ENCODE measurements at regions of chr12 and their contacts with region 1.

Region 1: DNA sequence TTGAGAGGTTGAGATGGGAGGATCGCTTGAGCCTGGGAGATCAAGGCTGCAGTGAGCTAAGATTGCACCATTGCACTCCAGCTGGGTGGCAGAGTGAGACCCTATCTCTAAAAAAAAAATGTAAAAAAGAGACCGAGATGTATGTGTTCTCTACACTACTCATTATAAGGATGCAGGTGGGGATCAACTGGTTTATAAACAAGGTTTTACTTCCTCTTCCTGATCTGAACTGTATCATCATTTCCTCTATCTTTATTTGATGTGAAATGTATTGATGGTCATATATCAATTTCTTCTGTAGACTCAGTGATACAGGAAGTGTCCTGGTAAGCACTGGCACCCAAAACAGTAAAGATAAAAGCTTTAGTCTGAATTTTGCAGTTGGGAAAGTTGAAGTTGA is 20.1 kb upstream of the USP44 start:
- DNase-seq: no peak
- ATAC-seq: no peak
- H3K4me3 ChIP-seq: no peak overlapping the region
- H3K4me3 Mint-ChIP-seq: peak overlapping the region in 3 of 10 donors; percentile 7 to 55 (median 34)
- H3K27ac ChIP-seq: no peak overlapping the region
- H3K27ac Mint-ChIP-seq: peak overlapping the region in 7 of 9 donors; percentile 62 to 83 (median 71)
- H3K4me1 ChIP-seq: peaks cover 4 to 14% of the 10 kb centered on the region in 2 donors
- H3K4me1 Mint-ChIP-seq: peaks cover 6 to 49% (median 32%) of the 10 kb centered on the region in 7 donors
- H3K27me3 ChIP-seq: no peaks in the 10 kb centered on the region
- H3K27me3 Mint-ChIP-seq: peaks cover 4 to 21% (median 8%) of the 10 kb centered on the region in 5 donors

Region 2: DNA sequence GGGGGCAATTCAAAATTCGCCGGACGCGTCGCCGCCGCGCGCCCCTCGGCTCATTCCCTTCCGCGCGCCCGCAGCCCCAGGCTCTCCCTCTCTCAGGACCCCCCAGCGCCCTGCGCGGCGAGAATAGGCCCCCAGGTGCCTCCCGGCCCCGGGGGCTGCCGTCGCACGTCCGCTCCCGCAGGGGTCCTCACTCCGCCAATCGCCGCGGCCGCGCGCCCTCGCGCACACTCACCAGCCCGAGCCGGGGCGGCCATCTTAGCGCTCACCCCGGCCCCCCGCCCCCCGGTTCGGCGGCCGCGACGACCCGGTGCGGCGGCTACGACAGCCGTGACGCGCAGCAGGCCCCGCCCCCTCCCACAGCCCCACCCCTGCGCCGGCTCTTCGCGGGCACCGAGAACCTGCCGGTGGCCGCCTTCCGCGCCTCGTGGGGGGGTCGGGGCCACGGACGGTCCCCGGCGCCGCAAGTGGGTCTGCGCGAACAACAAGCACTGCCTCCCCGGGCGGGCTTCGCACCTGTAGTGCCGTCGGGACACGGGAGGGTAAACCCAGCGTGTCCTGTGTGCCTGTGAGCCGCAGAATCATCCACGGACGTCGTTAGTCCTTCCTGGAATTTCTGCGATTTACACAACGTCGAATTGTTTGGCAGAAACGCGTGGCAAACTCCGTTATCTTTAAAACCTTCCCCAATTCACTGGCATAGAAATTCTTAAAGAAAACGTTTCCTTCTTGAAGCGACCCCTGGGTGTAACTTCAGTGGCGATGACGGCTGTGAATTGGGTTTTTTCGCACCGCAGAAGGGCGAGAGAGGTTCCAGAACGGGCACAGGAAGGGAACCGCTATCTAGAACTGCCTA is 22.6 kb before region 1 on chr12:
- CTCF ChIA-PET with region 1: no interaction called
- POLR2A ChIA-PET with region 1: interaction called, 7 read pairs
- intact Hi-C with region 1: loop called in 1 of 2 experiments (anchors 2 kb)
- DNase-seq: peak; percentile 66 to 81 (median 77)
- ATAC-seq: peak; percentile 94
- H3K4me3 ChIP-seq: peak overlapping the region; percentile 75
- H3K4me3 Mint-ChIP-seq: peak overlapping the region; percentile 89 to 96 (median 94)
- H3K27ac ChIP-seq: peak overlapping the region; percentile 96
- H3K27ac Mint-ChIP-seq: peak overlapping the region; percentile 70 to 98 (median 94)
- H3K4me1 ChIP-seq: peaks cover 6 to 23% of the 10 kb centered on the region in 2 donors
- H3K4me1 Mint-ChIP-seq: peaks cover 36 to 73% (median 61%) of the 10 kb centered on the region in 7 donors
- H3K27me3 ChIP-seq: no peaks in the 10 kb centered on the region
- H3K27me3 Mint-ChIP-seq: peaks cover 0 to 22% (median 7%) of the 10 kb centered on the region in 5 donors

Region 3: DNA sequence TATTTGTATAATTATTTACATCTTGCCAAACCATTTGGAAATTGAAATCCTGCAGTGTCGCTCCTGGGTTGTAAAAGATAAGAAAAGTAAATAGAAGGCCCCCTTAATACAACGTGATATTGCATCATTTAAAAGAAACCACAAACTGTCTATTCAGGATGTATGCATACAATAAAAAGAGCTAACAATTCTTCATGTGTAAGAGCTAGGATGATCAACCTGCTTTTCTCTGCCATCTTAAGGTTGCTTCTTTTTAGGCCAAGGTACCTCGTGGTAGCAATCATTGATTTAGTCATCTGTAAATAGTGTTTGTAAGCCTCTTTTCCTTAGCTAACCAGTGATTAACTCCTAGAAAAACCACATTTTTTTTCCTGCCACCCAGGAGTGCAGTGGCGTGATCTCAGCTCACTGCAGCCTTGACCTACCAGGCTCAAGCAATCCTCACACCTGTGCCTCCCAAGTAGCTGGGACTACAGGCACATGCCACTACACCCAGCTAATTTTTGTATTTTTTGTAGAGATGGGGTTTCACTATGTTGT is 16.8 kb before region 1 on chr12:
- CTCF ChIA-PET with region 1: no interaction called
- POLR2A ChIA-PET with region 1: interaction called, 10 read pairs
- intact Hi-C with region 1: loop called in 1 of 2 experiments (anchors 2 kb)
- DNase-seq: no peak
- ATAC-seq: no peak
- H3K4me3 ChIP-seq: no peak overlapping the region
- H3K4me3 Mint-ChIP-seq: peak overlapping the region in 9 of 10 donors; percentile 11 to 89 (median 30)
- H3K27ac ChIP-seq: no peak overlapping the region
- H3K27ac Mint-ChIP-seq: peak overlapping the region in 7 of 9 donors; percentile 0 to 97 (median 73)
- H3K4me1 ChIP-seq: peaks cover 0 to 33% of the 10 kb centered on the region in 2 donors
- H3K4me1 Mint-ChIP-seq: peaks cover 22 to 53% (median 38%) of the 10 kb centered on the region in 7 donors
- H3K27me3 ChIP-seq: no peaks in the 10 kb centered on the region
- H3K27me3 Mint-ChIP-seq: peaks cover 0 to 6% (median 0%) of the 10 kb centered on the region in 5 donors

Measured in naive thymus-derived CD4-positive, alpha-beta T cell (primary cell).